CD8-positive, alpha-beta memory T cell (primary cell): ENCODE measurements at regions of chr20 and their contacts with region 1.

Region 1: GRCh38 chr20:59087829-59088433 is 45.3 kb upstream of the PRELID3B start:
- DNase-seq: peak; percentile 71 to 88 (median 81)
- H3K4me3 ChIP-seq: no peak overlapping the region
- H3K4me3 Mint-ChIP-seq: no peak overlapping the region
- H3K27ac ChIP-seq: no peak overlapping the region
- H3K27ac Mint-ChIP-seq: peak overlapping the region in 4 of 8 donors; percentile 15 to 54 (median 50)
- H3K4me1 ChIP-seq: peaks cover 7% of the 10 kb centered on the region
- H3K4me1 Mint-ChIP-seq: peaks cover 4 to 6% (median 6%) of the 10 kb centered on the region in 3 donors
- H3K27me3 ChIP-seq: no peaks in the 10 kb centered on the region
- H3K27me3 Mint-ChIP-seq: peaks cover 3 to 8% of the 10 kb centered on the region in 2 donors

Region 2: GRCh38 chr20:58982406-58983114 is 105.4 kb before region 1 on chr20:
- CTCF ChIA-PET with region 1: no interaction called
- POLR2A ChIA-PET with region 1: no interaction called
- DNase-seq: peak in 3 of 5 donors; percentile 29 to 68 (median 65)
- H3K4me3 ChIP-seq: peak overlapping the region; percentile 73
- H3K4me3 Mint-ChIP-seq: peak overlapping the region; percentile 85 to 96 (median 94)
- H3K27ac ChIP-seq: peak overlapping the region; percentile 70
- H3K27ac Mint-ChIP-seq: peak overlapping the region; percentile 86 to 95 (median 91)
- H3K4me1 ChIP-seq: peaks cover 30% of the 10 kb centered on the region
- H3K4me1 Mint-ChIP-seq: peaks cover 44 to 53% (median 45%) of the 10 kb centered on the region in 3 donors
- H3K27me3 ChIP-seq: no peaks in the 10 kb centered on the region
- H3K27me3 Mint-ChIP-seq: peaks cover 0 to 7% of the 10 kb centered on the region in 2 donors

Region 3: DNA sequence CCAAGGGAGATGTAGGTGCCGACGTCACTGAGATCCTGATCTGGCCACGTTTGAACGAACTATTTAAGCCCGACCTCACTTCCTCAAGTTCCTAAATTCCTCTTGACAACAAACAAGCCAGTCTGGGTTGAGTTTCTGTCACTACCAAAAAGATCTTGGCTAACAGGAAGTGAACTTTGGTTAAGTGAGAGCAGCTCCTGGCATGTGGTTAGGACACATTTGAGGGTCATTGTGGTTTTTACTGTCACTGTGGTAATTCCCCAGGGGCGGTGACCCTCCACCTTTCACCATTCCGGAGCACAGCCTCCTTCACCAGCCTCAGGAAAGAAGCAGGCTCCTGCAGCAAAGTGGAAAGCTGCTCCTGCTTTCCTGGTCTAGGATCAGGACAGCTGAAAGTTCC is 32.6 kb after region 1 on chr20:
- CTCF ChIA-PET with region 1: interaction called, 18 read pairs
- POLR2A ChIA-PET with region 1: interaction called, 4 read pairs
- DNase-seq: peak in 4 of 5 donors; percentile 18 to 69 (median 51)
- H3K4me3 ChIP-seq: no peak overlapping the region
- H3K4me3 Mint-ChIP-seq: peak overlapping the region; percentile 3 to 87 (median 59)
- H3K27ac ChIP-seq: peak overlapping the region; percentile 44
- H3K27ac Mint-ChIP-seq: peak overlapping the region; percentile 95 to 100 (median 99)
- H3K4me1 ChIP-seq: peaks cover 78% of the 10 kb centered on the region
- H3K4me1 Mint-ChIP-seq: peaks cover 71 to 87% (median 84%) of the 10 kb centered on the region in 3 donors
- H3K27me3 ChIP-seq: no peaks in the 10 kb centered on the region
- H3K27me3 Mint-ChIP-seq: peaks cover 0 to 2% of the 10 kb centered on the region in 2 donors

Region 4: GRCh38 chr20:59145924-59146779 is 58.2 kb after region 1 on chr20:
- CTCF ChIA-PET with region 1: interaction called, 10 read pairs
- POLR2A ChIA-PET with region 1: no interaction called
- DNase-seq: peak in 3 of 5 donors; percentile 49 to 74 (median 66)
- H3K4me3 ChIP-seq: peak overlapping the region; percentile 70
- H3K4me3 Mint-ChIP-seq: peak overlapping the region; percentile 87 to 97 (median 91)
- H3K27ac ChIP-seq: peak overlapping the region; percentile 73
- H3K27ac Mint-ChIP-seq: peak overlapping the region; percentile 94 to 100 (median 98)
- H3K4me1 ChIP-seq: peaks cover 73% of the 10 kb centered on the region
- H3K4me1 Mint-ChIP-seq: peaks cover 73 to 76% (median 74%) of the 10 kb centered on the region in 3 donors
- H3K27me3 ChIP-seq: no peaks in the 10 kb centered on the region
- H3K27me3 Mint-ChIP-seq: peaks cover 0 to 1% of the 10 kb centered on the region in 2 donors

Region 5: DNA sequence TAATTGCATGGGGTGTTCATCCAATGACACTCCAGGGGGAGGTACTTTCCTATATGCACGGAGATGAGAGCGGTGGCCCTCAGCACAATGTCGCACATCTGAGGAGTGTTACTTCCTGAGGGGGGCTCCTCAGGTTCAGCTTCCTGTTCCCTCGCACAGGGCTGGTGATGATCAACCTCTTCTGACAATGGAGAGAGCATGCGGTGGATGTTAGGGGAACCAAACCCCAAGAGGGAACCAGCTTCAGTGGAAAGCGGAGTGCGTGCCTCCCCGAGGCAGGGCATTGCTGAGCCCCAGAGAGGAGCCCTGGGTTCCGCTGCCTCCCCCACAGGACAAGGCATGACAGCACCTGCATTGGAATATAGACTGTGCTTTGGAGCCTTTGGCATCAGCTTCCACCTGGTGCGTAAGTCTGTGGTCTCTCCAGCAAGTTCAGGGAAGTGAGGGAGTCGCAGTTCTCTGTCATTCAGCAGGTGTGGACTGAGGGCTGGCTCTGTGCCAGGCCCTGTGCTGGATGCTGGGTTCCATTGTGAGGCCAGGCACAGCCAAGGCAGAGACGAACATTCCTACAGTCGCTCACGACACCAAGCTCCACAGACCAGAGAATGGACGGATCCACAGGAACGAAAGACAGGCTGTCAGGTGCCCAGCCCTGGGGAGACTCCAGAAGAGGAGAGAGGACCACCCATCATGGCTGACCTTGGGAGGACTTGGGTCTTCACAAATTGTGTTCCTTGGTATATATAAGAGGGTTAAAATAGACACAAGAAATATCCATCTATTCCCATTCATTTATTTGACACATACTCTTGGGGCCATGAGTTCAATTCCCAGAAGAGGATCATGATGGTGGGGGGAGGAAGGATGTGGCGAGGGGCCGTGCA is 71.8 kb after region 1 on chr20:
- CTCF ChIA-PET with region 1: interaction called, 14 read pairs
- POLR2A ChIA-PET with region 1: interaction called, 3 read pairs
- DNase-seq: peak; percentile 74 to 93 (median 87)
- H3K4me3 ChIP-seq: peak overlapping the region; percentile 92
- H3K4me3 Mint-ChIP-seq: peak overlapping the region; percentile 88 to 95 (median 92)
- H3K27ac ChIP-seq: peak overlapping the region; percentile 98
- H3K27ac Mint-ChIP-seq: peak overlapping the region; percentile 95 to 100 (median 98)
- H3K4me1 ChIP-seq: peaks cover 80% of the 10 kb centered on the region
- H3K4me1 Mint-ChIP-seq: peaks cover 70 to 95% (median 88%) of the 10 kb centered on the region in 3 donors
- H3K27me3 ChIP-seq: no peaks in the 10 kb centered on the region
- H3K27me3 Mint-ChIP-seq: peaks cover 0 to 2% of the 10 kb centered on the region in 2 donors

Region 6: DNA sequence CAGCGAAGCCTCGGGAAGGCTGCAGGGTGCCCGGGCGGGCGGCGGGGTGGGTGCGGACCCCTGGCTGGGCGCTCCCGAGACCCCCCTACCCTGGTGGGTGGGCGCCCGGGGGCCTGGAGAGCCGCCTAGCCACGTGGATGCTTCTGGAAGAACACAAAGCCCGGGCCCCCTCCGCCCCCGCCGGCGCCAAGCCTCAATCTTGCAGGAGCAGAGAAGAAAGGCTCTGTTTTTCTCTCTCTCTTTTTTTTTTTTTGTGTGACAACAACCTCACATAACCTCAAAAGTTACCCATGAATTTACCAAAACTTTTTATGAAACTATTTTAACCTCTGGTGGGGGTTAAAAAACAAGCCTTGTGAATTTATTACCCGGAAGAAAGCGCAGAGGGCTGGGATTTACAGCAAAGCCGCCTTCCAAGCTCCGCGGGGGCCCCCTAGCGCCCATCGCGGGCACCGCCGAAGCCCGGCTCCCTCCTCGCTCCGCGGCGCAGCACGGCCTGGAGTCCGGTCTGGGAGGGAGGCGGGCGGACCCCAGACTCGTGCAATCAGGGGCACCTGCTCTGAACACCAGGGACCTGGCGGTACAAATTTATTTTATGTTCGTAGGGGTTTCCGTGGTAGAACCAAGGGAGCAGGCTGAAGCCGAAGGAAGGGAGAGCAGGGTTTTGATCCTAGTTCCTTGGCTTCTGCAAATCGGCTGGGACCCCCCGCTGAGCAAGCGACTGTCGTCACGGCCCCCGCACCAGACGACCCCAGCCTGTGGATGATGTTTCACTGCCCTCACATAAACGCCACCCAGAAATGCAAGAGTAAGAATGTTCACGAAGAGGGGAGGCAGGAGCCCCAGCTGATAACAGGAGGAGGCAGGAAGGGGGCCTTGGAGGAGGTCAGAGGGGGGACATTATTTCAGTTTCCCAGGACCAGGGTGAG is 134.6 kb after region 1 on chr20:
- CTCF ChIA-PET with region 1: interaction called, 31 read pairs
- POLR2A ChIA-PET with region 1: interaction called, 5 read pairs
- DNase-seq: peak; percentile 64 to 83 (median 68)
- H3K4me3 ChIP-seq: peak overlapping the region; percentile 38
- H3K4me3 Mint-ChIP-seq: peak overlapping the region; percentile 67 to 81 (median 74)
- H3K27ac ChIP-seq: no peak overlapping the region
- H3K27ac Mint-ChIP-seq: peak overlapping the region in 7 of 8 donors; percentile 6 to 91 (median 77)
- H3K4me1 ChIP-seq: peaks cover 16% of the 10 kb centered on the region
- H3K4me1 Mint-ChIP-seq: peaks cover 18 to 40% (median 20%) of the 10 kb centered on the region in 3 donors
- H3K27me3 ChIP-seq: no peaks in the 10 kb centered on the region
- H3K27me3 Mint-ChIP-seq: no peaks in the 10 kb centered on the region